ENCODE measurements at regions of chr11 and their contacts with region 1.

Region 1: DNA sequence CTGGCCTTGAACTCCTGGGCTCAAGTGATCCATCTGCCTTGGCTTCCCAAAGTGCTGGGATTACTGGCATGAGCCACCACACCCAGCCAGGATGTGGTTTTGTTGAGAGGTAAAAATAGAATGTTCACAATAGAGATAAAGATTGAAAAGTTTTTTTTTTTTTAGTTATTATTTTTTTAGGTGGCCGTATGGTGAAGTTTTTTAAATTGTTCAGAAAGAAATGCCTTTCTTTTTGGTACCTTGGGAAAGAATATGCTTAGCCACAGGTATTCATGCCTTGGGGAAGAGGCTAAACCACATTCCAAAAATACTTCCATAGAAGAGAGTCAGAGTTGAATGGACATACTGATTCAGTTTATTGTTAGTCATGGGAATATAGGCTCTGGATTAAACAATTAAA is 143.4 kb downstream of the C11orf91 start:
- DNase-seq: no peak
- H3K4me3 ChIP-seq: no peak overlapping the region
- H3K27ac ChIP-seq: no peak overlapping the region
- H3K4me1 ChIP-seq: no peaks in the 10 kb centered on the region
- CTCF ChIP-seq: no peak

Region 2: GRCh38 chr11:33617665-33618350 is 60.6 kb after region 1 on chr11:
- CTCF ChIA-PET with region 1: no interaction called
- POLR2A ChIA-PET with region 1: no interaction called
- intact Hi-C with region 1: loop called (anchors 10 kb)
- DNase-seq: no peak
- H3K4me3 ChIP-seq: no peak overlapping the region
- H3K27ac ChIP-seq: no peak overlapping the region
- H3K4me1 ChIP-seq: peaks cover 9% of the 10 kb centered on the region
- CTCF ChIP-seq: no peak